ENCODE measurements at regions of chr4 and their contacts with region 1.

Region 1: DNA sequence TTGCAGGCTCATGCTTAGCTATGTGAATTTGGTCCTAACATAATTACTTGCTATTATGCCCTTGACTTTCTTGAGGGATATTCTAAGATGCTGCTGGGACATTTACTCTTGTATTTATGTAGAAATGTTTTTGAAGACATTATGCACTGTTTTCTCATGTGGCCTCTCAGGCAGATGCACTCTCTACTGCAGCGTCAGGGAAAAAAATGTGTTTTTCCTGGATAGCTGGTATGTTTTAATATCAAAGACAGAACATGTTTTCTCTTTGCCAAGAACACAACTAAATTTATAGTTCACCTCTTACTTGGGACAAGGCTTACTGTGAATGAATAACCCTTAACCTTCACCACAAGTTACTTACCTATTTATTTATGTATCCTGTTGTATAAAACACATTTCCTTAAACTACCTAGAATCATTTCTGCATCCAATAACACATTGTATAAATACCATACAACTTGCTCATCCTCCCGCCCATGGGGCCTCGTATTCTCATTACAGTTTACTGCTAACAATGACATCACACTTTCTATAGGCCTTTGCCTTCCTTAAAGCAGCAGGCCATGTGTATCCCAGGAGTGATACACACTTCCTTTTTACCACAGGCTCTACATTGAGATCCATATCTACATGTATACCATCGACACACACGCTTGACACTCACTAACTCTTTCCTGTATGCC is 178.7 kb downstream of the SLIT2 start:
- DNase-seq: no peak
- H3K4me3 ChIP-seq: no peak overlapping the region
- H3K27ac ChIP-seq: no peak overlapping the region
- H3K4me1 ChIP-seq: no peaks in the 10 kb centered on the region
- H3K27me3 ChIP-seq: no peaks in the 10 kb centered on the region
- CTCF ChIP-seq: no peak
- POLR2A ChIP-seq: no peak

Region 2: DNA sequence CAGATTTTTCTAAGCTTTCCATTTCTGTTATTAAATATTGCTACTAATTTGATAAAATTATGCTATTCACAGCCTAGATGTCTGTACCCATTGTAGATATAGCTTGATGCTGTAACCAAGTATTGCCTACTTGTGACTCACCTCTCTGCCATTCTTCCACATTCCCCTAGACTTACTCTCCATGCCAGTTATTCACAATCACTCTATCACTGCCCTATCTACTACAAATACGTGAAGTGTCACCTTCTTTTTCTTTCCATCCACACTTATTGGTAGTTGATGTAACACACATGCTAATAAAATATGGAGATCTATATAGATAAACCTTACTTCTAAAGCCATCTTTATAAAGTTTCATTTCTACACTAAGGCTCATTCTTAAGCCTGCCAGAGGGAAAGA is 90.5 kb after region 1 on chr4:
- intact Hi-C with region 1: loop called (anchors 10 kb)
- DNase-seq: no peak
- H3K4me3 ChIP-seq: no peak overlapping the region
- H3K27ac ChIP-seq: no peak overlapping the region
- H3K4me1 ChIP-seq: no peaks in the 10 kb centered on the region
- H3K27me3 ChIP-seq: no peaks in the 10 kb centered on the region
- CTCF ChIP-seq: no peak
- POLR2A ChIP-seq: no peak